ENCODE measurements at regions of chr18 and their contacts with region 1.

Region 1: DNA sequence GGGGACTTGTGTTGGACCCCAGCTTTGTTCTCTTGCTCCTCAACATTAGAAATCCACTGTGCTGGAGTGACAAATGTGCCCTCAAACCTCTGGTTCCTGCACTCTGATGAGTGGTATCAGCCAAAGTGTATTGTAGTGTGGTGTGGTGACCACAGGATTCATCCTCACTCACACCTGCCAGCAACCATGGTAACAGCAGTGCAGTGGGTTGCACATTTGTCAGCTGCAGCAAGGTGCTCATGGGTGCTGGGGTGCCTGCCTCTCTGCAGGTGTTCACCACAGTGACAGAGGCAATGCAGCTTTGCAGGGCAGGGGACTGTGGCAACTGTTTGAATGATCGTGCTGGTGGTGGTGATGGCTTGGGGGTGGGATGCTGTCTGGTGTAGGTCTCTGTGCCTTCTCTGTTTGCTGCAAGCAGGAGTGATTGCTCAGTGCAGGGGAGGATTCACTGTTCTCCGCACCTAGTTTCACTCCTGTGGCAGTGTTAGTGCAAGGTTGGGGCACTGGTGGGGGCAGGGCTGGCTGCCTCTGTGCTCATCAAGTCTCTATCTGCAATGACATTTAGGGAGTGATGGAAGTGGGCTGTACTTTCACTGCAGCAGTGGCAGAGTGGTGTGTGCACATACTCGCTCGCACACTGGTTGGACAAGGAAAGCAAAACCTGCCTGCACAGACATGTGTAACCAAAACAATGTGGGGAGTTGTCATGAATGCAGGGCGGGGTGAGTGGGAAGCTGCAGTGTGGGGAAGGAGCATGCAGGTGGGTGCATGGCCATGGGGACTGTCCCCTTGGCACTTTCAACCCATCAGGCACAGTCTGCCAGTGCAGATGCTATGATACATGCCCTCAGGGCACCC is 301.1 kb downstream of the PIK3C3 start:
- DNase-seq: peak in 1 of 6 donors; percentile 24
- ATAC-seq: no peak
- H3K4me3 ChIP-seq: no peak overlapping the region
- H3K27ac ChIP-seq: no peak overlapping the region
- H3K4me1 ChIP-seq: no peaks in the 10 kb centered on the region
- H3K27me3 ChIP-seq: no peaks in the 10 kb centered on the region
- CTCF ChIP-seq: no peak

Region 2: DNA sequence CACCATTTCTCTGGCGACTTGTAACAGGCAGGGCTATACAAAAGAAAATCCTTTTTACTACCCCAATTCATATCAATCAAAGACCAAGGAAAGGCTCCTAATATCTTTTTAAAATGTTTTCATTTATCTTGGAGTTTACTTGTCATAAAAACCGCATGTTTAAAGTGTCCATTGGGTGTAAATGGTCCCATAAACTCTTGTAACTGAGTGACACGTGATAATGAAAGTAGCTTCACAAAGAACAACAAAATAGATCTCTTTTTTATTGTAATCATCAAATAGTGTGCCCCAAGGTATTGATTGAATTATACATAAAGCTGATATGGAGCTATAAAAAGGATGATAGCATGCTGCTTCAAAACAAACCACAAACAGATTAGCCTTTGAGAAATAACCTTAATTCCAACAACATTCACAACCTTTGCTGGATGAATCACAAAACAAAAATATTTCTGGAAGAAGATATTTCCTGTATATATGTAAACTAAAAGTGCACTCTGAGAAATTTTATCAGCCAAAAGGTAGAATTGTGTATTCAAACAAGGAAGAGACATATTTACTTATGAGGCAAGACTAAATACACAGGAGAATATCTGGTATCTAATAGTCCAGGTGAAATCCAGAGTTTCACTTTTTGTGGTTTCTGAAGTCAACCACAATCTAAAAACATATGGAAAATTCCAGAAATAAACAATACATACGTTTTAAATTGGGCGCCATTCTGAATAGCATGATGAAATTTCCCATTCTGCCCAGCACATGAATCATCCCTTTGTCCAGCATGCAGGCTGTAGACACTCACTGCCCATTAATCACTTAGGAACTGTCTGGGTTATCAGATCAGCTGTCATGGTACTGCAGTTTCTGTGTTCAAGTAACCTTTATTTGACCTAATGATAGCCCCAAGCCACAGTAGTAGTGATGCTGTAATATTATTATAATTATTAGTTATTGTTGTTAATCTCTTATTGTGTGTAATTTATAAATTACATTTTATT is 63.6 kb before region 1 on chr18:
- intact Hi-C with region 1: loop called in 1 of 3 experiments (anchors 10 kb)
- DNase-seq: no peak
- ATAC-seq: peak in 1 of 4 donors; percentile 32
- H3K4me3 ChIP-seq: no peak overlapping the region
- H3K27ac ChIP-seq: no peak overlapping the region
- H3K4me1 ChIP-seq: no peaks in the 10 kb centered on the region
- H3K27me3 ChIP-seq: no peaks in the 10 kb centered on the region
- CTCF ChIP-seq: no peak